ENCODE measurements at regions of chr6 and their contacts with region 1.

Region 1: DNA sequence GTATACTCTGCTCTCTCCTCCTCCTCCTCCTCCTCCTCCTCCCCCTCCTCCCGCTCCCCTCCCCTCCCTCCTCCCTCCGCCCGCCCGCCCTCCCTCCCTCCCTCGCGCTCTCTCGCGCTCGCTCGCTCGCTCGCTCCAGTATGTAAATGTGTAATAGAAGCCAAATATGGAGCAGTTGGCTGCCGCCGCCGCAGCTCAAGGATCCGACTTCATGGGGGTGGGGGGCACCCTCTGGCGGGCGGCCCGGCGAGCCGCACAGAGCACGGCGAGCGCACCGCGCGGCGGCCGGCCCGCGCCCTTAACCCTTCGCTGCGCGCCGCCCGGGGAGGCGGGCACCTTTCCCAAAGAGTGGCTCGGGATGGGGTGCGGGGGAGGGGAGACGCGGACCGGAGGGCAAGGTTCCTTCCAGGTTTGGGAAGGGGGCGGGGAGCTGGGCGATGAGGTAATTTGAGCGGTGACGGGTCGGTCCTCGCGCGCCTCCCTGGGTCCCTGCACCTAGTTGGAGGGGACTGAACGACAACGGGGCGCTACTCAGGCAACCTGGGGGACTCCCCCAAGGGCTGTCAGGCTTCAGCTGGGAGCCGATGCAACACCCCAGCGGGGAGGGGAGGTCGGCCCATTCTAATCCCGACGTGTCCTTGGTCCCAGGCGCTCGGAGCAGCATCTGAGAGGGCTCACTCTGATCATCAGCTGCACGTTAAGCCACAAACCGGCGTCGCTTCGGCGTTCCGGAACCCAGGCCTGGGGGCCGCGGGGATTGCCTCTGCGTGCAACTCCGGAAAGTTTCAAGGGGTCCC is 409 bp upstream of the ATXN1 start:
- DNase-seq: peak; percentile 93 to 96
- ATAC-seq: peak; percentile 77
- H3K4me3 ChIP-seq: peak overlapping the region; percentile 93 to 99
- H3K27ac ChIP-seq: peak overlapping the region; percentile 62 to 98
- H3K4me1 ChIP-seq: no peaks in the 10 kb centered on the region
- H3K27me3 ChIP-seq: no peaks in the 10 kb centered on the region

Region 2: GRCh38 chr6:16409531-16410441 is 351.9 kb before region 1 on chr6:
- intact Hi-C with region 1: loop called in 1 of 2 experiments (anchors 5 kb)
- DNase-seq: peak in 1 of 2 donors; percentile 78
- ATAC-seq: peak; percentile 69
- H3K4me3 ChIP-seq: no peak overlapping the region
- H3K27ac ChIP-seq: no peak overlapping the region
- H3K4me1 ChIP-seq: peaks cover 0 to 12% of the 10 kb centered on the region in 2 donors
- H3K27me3 ChIP-seq: no peaks in the 10 kb centered on the region

Region 3: GRCh38 chr6:16540804-16541752 is 220.6 kb before region 1 on chr6:
- intact Hi-C with region 1: loop called in 1 of 2 experiments (anchors 10 kb)
- DNase-seq: peak; percentile 63 to 77
- ATAC-seq: peak; percentile 79
- H3K4me3 ChIP-seq: no peak overlapping the region
- H3K27ac ChIP-seq: peak overlapping the region in 1 of 2 donors; percentile 58
- H3K4me1 ChIP-seq: peaks cover 7 to 15% of the 10 kb centered on the region in 2 donors
- H3K27me3 ChIP-seq: no peaks in the 10 kb centered on the region

Region 4: GRCh38 chr6:16704401-16705045 is 57.1 kb before region 1 on chr6:
- intact Hi-C with region 1: loop called (anchors 10 kb)
- DNase-seq: no peak
- ATAC-seq: peak; percentile 49
- H3K4me3 ChIP-seq: peak overlapping the region; percentile 42 to 68
- H3K27ac ChIP-seq: peak overlapping the region in 1 of 2 donors; percentile 37
- H3K4me1 ChIP-seq: peaks cover 2 to 6% of the 10 kb centered on the region in 2 donors
- H3K27me3 ChIP-seq: no peaks in the 10 kb centered on the region

Region 5: DNA sequence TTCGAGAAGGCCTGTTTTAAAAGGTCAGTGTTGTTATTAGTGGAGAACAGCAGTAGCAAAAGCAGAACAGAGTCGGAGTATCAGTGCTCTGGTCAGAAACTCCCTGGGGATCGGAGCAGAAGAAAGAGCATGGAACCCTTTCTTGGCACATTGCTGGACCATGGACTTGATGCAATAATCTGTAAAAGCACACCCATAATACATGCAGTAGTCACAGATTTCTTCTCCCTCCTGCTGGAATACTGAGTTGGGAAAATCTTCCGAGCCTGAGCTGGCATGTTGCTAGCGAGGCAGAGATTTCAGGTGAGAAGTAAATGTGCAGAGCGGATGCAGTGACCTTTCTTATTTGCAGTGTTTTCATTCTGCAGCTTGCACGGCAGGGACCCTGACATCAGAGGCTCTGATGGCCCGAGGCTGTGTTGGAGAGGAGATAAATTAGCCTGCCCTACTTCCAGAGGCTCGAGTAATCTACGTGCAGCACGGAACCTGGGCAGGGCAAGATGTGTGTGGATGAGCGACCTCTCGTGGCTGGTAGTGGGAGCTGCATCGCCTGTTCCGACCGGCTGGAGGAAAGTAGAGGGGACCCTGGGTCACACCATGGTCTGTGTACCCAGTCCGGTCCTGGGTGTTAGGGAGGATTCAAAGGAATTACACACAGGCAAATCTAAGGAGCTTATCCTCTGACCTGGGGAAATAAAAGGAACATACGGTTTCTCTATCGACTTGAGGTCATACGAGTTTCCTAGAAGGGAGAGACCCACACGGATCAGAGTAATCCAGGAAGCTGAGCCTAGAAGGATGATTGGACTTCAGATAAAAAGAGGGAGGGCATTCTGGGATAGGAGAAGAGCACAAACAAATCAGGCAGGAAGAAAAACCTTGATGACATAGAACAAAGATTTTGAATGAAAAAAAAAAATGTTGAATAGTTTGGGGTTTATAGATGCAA is 203.2 kb after region 1 on chr6:
- intact Hi-C with region 1: loop called in 1 of 2 experiments (anchors 10 kb)
- DNase-seq: peak; percentile 73 to 87
- ATAC-seq: peak; percentile 87
- H3K4me3 ChIP-seq: no peak overlapping the region
- H3K27ac ChIP-seq: no peak overlapping the region
- H3K4me1 ChIP-seq: no peaks in the 10 kb centered on the region
- H3K27me3 ChIP-seq: peaks cover 0 to 2% of the 10 kb centered on the region in 2 donors

Region 6: GRCh38 chr6:17130786-17131185 is 369.1 kb after region 1 on chr6:
- intact Hi-C with region 1: no loop called
- DNase-seq: no peak
- ATAC-seq: no peak
- H3K4me3 ChIP-seq: no peak overlapping the region
- H3K27ac ChIP-seq: no peak overlapping the region
- H3K4me1 ChIP-seq: no peaks in the 10 kb centered on the region
- H3K27me3 ChIP-seq: no peaks in the 10 kb centered on the region

Measured in aorta (tissue), 5 donors.